ENCODE measurements at regions of chr2 and their contacts with region 1.

Region 1: DNA sequence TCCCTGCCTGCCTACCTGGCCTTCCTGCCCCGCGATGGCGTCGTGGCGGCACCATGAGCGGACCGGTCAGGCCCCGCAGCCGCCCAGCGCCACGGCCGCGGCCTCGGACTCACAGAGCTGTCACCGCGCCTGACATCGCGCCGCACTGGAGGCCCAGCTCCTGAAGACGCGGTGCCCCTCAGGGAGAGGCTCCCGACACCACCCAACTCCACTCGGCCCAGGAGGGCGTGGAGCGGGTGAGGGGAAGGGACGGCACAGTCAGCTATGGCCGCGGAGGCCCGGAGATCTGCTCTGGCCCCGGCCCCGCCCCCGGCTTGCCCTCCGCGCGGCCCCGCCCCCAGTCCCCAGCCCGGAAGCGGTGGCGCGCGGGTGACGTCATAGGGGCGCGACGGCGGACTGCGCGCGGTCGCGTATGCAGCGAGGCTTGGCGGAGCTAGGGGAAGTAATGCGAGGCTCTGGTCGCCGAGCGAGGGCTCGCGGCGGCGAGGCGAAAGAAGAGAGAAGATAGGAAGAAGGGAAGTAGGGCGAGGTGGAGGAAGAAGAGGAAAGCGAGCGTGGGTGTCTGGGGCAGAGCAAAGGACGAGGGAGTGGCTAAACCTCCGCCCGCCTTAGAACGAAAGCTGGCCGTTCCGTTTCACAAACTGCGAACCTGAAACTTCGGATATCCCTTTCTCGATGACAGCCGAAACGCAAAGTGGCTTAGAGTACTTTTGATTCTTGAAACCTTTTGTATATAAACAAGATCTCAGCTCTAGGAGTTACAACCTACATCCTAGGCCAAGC is at the start of gene SLC35F5:
- DNase-seq: peak; percentile 96
- ATAC-seq: peak; percentile 89
- H3K4me3 Mint-ChIP-seq: peak within 1 kb of the TSS; percentile 89
- H3K27ac Mint-ChIP-seq: peak within 1 kb of the TSS; percentile 99
- H3K4me1 Mint-ChIP-seq: peaks cover 13% of the 10 kb centered on the region
- H3K27me3 Mint-ChIP-seq: no peaks in the 10 kb centered on the region
- total RNA-seq, gene SLC35F5: 13.4 to 18.4 TPM

Region 2: GRCh38 chr2:113324684-113325160 is 431.8 kb before region 1 on chr2:
- CTCF ChIA-PET with region 1: no interaction called
- POLR2A ChIA-PET with region 1: no interaction called
- intact Hi-C with region 1: no loop called
- DNase-seq: peak; percentile 77
- ATAC-seq: peak; percentile 80
- H3K4me3 Mint-ChIP-seq: peak overlapping the region; percentile 66
- H3K27ac Mint-ChIP-seq: no peak overlapping the region
- H3K4me1 Mint-ChIP-seq: peaks cover 34% of the 10 kb centered on the region
- H3K27me3 Mint-ChIP-seq: peaks cover 6% of the 10 kb centered on the region

Region 3: GRCh38 chr2:113692698-113693428 is 63.7 kb before region 1 on chr2:
- CTCF ChIA-PET with region 1: no interaction called
- POLR2A ChIA-PET with region 1: no interaction called
- intact Hi-C with region 1: loop called in 1 of 2 experiments (anchors 2 kb)
- DNase-seq: peak; percentile 61
- ATAC-seq: peak; percentile 86
- H3K4me3 Mint-ChIP-seq: peak overlapping the region; percentile 63
- H3K27ac Mint-ChIP-seq: peak overlapping the region; percentile 96
- H3K4me1 Mint-ChIP-seq: peaks cover 47% of the 10 kb centered on the region
- H3K27me3 Mint-ChIP-seq: no peaks in the 10 kb centered on the region

Region 4: DNA sequence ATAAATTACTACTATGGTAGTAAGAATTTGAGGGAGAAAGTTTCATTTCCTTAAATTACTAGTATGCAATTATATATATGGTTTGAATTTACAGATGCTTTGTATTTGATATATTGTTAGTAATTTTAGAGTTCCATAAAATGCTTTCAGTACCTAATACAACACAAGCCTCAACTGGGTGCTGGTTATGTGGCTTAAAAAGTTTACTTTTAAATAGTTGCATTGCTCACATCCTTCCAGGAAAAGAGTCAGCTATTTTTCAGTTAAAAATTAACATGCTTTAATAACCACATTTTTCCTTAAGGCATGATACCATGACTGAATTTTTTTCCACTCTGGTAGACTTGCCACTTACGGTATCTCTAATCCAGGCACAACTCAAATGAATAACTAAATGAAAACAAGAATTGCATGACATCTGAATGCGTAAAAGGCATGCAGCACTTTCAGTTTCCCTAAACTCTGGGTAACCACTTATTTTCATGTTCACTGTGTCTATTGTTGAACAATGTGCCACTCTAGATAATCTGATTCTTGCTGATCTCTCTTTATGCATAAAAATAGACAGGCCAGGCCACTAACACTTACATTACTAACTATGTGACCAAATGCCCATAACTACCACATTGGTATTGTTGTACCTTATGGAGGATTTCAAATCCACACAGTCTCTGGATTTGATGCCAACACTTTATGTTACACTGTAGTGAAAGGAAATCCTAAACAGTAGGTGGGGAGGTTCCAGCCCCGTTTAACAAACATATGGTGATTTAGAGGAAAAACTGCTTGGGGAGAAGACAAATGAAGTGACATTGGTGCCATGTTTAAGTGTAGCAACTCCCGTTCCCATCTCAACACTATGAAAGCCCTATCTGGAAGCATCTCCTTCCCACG is 35.4 kb after region 1 on chr2:
- CTCF ChIA-PET with region 1: interaction called, 4 read pairs
- POLR2A ChIA-PET with region 1: no interaction called
- intact Hi-C with region 1: loop called (anchors 1 to 5 kb)
- DNase-seq: peak; percentile 20
- ATAC-seq: peak; percentile 86
- H3K4me3 Mint-ChIP-seq: peak overlapping the region; percentile 4
- H3K27ac Mint-ChIP-seq: peak overlapping the region; percentile 89
- H3K4me1 Mint-ChIP-seq: peaks cover 34% of the 10 kb centered on the region
- H3K27me3 Mint-ChIP-seq: no peaks in the 10 kb centered on the region

Region 5: DNA sequence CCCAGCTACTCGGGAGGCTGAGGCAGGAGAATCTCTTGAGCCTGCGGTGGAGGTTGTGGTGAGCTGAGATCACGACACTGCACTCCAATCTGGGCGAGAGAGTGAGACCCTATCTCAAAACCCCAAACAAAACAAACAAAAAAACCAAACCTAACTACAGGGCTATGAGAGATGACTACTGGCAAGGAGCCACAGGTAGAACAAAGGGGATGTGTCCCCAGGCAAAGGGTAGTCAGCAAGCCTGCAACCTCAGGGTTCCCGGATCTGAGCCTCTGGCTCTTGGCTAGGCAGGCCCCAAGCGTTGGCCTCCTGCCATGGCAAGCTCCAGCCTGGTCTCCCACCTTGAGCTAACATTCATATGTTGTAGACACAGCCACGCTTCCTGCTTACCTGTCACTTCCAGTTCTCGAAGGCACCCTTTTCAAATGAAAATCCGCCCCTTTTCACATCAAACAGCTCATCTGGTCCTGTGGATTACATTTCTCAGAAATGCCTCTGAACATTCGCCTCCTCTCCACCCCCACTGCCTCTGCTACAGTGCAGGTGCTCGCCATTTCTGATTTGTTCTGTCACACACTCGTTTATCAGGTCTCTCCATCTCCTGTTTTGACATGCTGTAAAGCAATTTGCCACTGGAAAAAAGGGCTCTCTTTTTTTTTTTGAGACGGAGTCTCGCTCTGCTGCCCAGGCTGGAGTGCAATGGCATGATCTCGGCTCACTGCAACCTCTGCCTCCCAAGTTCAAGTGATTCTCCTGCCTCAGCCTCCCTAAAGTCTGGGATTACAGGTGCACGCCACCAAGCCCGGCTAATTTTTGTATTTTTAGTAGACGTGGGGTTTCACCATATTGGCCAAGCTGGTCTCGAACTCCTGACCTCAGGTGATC is 120.2 kb after region 1 on chr2:
- CTCF ChIA-PET with region 1: no interaction called
- POLR2A ChIA-PET with region 1: interaction called, 4 read pairs
- intact Hi-C with region 1: loop called in 1 of 2 experiments (anchors 1 kb)
- DNase-seq: peak; percentile 92
- ATAC-seq: peak; percentile 93
- H3K4me3 Mint-ChIP-seq: peak overlapping the region; percentile 27
- H3K27ac Mint-ChIP-seq: peak overlapping the region; percentile 79
- H3K4me1 Mint-ChIP-seq: peaks cover 43% of the 10 kb centered on the region
- H3K27me3 Mint-ChIP-seq: no peaks in the 10 kb centered on the region

Region 6: GRCh38 chr2:113896791-113897190 is 140.2 kb after region 1 on chr2:
- CTCF ChIA-PET with region 1: interaction called, 10 read pairs
- POLR2A ChIA-PET with region 1: interaction called, 4 read pairs
- intact Hi-C with region 1: no loop called
- DNase-seq: no peak
- ATAC-seq: no peak
- H3K4me3 Mint-ChIP-seq: peak overlapping the region; percentile 8
- H3K27ac Mint-ChIP-seq: peak overlapping the region; percentile 77
- H3K4me1 Mint-ChIP-seq: peaks cover 94% of the 10 kb centered on the region
- H3K27me3 Mint-ChIP-seq: no peaks in the 10 kb centered on the region

Region 7: GRCh38 chr2:114134146-114134545 is 377.6 kb after region 1 on chr2:
- CTCF ChIA-PET with region 1: no interaction called
- POLR2A ChIA-PET with region 1: no interaction called
- intact Hi-C with region 1: no loop called
- DNase-seq: no peak
- ATAC-seq: no peak
- H3K4me3 Mint-ChIP-seq: no peak overlapping the region
- H3K27ac Mint-ChIP-seq: no peak overlapping the region
- H3K4me1 Mint-ChIP-seq: no peaks in the 10 kb centered on the region
- H3K27me3 Mint-ChIP-seq: no peaks in the 10 kb centered on the region

Measured in activated CD4-positive, alpha-beta T cell treated with anti-CD3 and anti-CD28 coated beads for 36 hours (primary cell).